ENCODE measurements at regions of chr12 and their contacts with region 1.

Region 1: DNA sequence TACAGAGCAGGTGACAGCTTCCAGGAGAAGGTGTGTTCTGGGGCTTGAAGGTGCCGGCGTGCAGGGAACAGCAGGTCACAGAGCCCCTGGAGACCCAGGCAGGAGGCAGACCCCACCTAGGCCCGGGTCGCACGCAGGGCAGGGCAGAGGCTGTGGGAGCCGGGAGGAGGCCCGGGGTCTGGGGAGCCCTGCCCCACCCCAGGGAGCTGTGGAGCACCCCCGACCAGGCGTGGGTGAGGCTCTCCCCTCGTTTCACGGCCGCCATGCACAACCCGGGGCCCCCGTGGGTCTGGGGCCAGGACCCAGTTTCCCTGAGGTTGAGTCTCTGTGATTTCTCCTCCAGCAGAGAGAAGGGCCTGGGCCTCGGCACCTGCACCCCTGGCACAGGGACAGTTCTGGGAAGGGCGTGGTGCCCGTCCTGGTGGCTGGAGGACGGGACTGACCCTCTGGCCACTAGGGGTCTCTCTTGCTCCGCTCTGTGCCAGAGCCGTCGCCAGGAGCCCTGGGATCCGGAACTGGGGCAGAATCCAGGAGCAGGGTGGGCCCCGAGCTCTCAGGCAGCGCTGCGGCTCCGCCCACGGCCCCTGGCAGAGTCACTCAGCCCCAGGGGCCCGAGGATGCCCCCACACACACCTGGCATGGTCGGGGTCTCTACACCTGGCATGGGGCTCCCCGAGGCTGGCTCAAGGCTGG is 75.2 kb upstream of the FBRSL1 start:
- DNase-seq: peak; percentile 89
- H3K4me3 ChIP-seq: no peak overlapping the region
- H3K27ac ChIP-seq: no peak overlapping the region
- H3K4me1 ChIP-seq: peaks cover 4% of the 10 kb centered on the region
- H3K27me3 ChIP-seq: peaks cover 6% of the 10 kb centered on the region
- CTCF ChIP-seq: peak; percentile 91

Region 2: GRCh38 chr12:132523576-132524331 is 109.0 kb after region 1 on chr12:
- intact Hi-C with region 1: loop called (anchors 2 kb)
- DNase-seq: peak; percentile 77
- H3K4me3 ChIP-seq: no peak overlapping the region
- H3K27ac ChIP-seq: no peak overlapping the region
- H3K4me1 ChIP-seq: peaks cover 5% of the 10 kb centered on the region
- H3K27me3 ChIP-seq: no peaks in the 10 kb centered on the region
- CTCF ChIP-seq: peak; percentile 86

Region 3: GRCh38 chr12:132614861-132615578 is 200.2 kb after region 1 on chr12:
- intact Hi-C with region 1: loop called (anchors 2 kb)
- DNase-seq: peak; percentile 83
- H3K4me3 ChIP-seq: no peak overlapping the region
- H3K27ac ChIP-seq: no peak overlapping the region
- H3K4me1 ChIP-seq: no peaks in the 10 kb centered on the region
- H3K27me3 ChIP-seq: peaks cover 33% of the 10 kb centered on the region
- CTCF ChIP-seq: peak; percentile 91

Region 4: GRCh38 chr12:132632501-132633228 is 217.9 kb after region 1 on chr12:
- intact Hi-C with region 1: no loop called
- DNase-seq: no peak
- H3K4me3 ChIP-seq: no peak overlapping the region
- H3K27ac ChIP-seq: no peak overlapping the region
- H3K4me1 ChIP-seq: no peaks in the 10 kb centered on the region
- H3K27me3 ChIP-seq: no peaks in the 10 kb centered on the region
- CTCF ChIP-seq: no peak

Measured in colonic mucosa (tissue), 4 donors.